AG04449 (cell line): ENCODE measurements at regions of chr6 and their contacts with region 1.

Region 1: DNA sequence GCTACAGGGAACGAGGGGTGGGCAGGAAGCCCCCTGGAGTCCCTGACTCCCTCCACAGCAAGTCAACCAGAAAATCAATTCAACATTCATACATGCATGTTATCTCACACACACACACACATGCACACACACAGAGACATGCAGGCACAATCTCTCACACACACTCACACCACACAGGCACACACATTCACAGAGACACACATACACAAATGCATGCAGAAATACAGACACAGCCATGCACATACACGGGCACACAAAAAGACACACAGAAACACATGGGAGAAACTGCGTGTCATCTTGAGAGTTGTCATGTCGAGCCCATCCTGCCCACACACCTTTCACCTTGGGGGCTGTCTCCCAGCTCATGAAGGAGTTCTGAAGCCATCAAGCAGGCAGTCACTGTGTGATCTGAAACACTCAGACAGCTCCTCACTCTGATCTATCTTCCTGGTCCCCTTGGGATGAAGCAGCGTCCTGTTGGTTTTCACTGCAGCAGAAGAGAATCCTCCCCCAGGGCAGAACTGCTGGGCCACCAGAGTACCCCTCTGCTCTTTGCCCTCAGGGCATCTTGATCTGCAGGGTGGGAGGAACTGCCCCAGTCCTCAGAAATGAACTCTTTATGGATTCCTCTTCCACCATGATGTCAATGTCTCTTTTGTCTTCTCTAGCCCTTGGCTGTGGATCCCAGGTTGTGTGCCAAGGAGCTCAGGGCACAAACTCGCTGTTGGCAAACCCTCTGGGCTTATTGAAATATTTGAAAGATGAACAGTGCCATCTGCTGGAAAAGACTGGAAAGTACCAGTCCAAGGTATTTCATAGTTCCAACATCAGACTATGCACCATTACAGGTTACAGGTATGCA is 8.8 kb downstream of the RAET1L start:
- DNase-seq: no peak
- H3K4me3 ChIP-seq: no peak overlapping the region
- CTCF ChIP-seq: peak; percentile 43

Region 2: DNA sequence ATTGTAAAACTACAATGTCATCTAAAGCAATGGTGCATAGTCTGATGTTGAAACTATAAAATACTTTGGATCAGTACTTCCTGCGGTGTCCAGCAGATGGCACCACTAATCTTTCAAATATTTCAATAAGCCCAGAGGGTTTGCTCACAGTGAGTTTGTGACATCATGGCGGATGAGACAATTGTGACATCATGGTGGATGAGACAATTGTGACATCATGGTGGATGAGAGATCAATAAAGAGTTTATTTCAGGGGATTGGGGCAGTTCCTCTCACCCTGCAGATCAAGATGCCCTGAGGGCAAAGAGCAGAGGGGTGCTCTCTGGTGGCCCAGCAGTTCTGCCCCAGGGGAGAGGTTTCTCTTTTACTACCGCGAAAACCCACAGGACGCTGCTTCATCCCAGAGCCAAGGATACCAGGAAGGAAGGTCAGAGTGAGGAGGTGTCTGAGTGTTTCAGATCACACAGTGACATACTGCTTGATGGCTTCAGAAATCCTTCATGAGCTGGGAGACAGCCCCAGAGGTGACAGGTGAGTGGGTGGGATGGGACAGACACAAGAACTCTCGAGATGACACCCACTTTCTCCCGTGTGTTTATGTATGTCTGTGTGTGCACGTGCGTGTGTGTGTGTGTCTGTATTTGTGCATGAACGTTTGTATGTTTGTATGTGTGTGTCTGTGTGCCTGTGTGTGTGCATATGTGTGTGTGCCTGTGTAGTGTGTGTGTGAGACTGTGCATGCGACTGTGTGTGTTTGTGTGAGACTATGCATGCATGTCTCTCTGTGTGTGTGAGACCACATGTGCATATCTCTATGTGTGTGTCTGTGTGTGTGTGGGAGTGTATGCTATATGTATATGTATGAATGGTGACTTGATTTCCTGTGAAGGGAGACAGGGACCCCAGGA is 82.1 kb before region 1 on chr6:
- CTCF ChIA-PET with region 1: interaction called, 37 read pairs
- POLR2A ChIA-PET with region 1: no interaction called
- DNase-seq: no peak
- H3K4me3 ChIP-seq: no peak overlapping the region
- CTCF ChIP-seq: peak; percentile 51

Region 3: DNA sequence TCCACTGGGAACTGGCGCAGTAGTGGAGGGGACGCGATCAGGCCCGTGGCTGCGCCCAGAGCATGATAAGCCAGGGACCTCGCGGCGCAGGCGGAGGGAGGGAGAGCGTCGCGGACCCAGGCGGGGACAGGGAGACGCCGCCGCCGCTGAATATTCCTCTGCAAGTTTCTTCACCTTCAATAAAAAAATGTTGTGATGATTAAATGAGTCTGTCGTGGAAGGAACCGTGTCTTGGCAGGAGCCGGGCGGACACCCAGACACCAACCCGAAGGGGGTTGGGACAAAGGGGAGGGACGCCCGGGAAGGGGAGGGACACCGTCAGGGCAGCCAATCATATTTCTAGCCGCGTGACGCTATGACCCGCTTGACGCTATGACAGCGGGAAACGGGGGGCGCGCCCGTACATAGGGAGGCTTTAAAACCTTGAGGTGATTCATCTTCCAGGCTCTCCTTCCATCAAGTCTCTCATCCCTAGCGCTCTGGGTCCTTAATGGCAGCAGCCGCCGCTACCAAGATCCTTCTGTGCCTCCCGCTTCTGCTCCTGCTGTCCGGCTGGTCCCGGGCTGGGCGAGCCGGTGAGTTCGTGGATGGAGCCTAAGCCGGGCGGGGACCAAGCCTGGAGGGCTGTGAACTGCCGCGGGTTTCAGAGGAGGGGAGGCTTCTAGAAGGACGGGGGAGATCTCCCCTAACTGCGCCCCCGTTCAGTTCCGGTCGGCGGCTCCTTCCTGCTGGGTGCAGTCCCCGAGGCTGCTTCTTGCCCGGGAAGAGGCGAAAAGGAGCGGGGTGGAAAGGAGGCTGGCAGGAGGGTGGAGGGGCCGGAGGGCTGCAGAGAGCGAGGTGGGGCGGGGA is 74.7 kb before region 1 on chr6 and contains the start of gene ULBP2:
- CTCF ChIA-PET with region 1: interaction called, 18 read pairs
- POLR2A ChIA-PET with region 1: no interaction called
- DNase-seq: peak; percentile 83
- H3K4me3 ChIP-seq: peak within 1 kb of the TSS; percentile 77
- CTCF ChIP-seq: no peak

Region 4: DNA sequence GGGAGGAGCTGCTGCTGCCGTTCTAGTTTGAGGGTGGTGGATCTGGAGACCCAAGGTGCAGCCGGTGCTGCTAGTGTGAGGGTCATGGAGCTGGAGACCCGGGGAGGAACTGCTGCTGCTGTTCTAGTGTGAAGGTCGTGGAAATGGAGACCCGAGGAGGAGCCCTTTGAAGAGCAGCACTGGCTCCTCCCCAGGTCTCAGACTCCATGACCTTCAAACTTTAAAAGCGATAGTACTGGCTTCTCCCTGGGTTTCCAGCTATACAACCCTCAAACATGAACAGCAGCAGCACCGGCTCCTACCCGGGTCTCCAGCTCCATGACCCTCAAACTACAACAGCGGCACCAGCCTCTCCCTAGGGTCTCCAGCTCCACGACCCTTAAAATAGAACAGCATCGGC is 36.9 kb after region 1 on chr6:
- CTCF ChIA-PET with region 1: interaction called, 11 read pairs
- POLR2A ChIA-PET with region 1: no interaction called
- DNase-seq: no peak
- H3K4me3 ChIP-seq: no peak overlapping the region
- CTCF ChIP-seq: no peak